IMR-90 (cell line): ENCODE measurements at regions of chr7 and their contacts with region 1.

Region 1: DNA sequence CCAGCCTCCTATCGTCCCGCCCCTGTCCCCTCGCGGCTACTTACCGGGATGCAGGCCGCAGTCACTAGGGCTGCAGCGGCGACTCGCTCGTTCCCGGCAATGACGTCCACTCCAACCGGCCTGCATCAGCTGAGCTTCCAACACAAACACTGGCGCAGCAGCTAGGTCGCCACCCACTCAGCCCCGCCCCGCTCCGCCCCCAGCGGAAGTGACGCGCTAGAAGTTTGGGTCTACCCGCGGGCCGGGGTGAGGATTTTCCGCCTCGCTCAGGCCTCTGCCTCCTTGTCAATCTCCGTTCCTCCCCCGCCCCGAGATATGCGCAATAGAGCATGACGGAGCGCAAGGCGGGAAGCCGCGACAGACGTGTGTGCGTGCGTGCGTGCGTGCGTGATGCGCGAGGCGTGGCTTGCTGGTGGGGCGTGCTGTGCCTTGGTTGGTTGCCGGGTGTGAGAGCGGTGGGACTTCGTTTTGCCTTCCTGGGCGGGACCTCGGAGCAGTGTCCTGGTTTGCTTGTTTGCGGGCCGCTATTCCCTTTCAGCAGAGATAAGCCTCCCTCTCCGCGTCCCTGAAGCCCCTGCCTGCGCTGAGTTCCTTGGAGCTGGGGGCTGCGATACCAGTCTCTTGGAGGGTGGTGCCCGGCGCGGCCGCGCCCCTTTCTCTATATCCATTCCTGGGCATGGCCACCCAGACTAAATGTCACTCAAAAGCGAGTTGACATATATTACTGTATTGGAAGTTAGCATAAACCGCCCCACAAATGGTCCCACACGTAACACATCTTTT is at the start of gene PNPLA8:
- DNase-seq: peak; percentile 99
- ATAC-seq: peak; percentile 89
- H3K4me3 ChIP-seq: peak within 1 kb of the TSS; percentile 67
- H3K27ac ChIP-seq: peak within 1 kb of the TSS; percentile 88
- H3K4me1 ChIP-seq: peaks cover 4% of the 10 kb centered on the region; the same call in 1 of the 2 replicates
- H3K27me3 ChIP-seq: no peaks in the 10 kb centered on the region
- CTCF ChIP-seq: no peak
- POLR2A ChIP-seq: peak; percentile 92
- RAD21 ChIP-seq: no peak
- total RNA-seq, gene PNPLA8: 14.5 and 23.9 TPM in 2 replicates

Region 2: DNA sequence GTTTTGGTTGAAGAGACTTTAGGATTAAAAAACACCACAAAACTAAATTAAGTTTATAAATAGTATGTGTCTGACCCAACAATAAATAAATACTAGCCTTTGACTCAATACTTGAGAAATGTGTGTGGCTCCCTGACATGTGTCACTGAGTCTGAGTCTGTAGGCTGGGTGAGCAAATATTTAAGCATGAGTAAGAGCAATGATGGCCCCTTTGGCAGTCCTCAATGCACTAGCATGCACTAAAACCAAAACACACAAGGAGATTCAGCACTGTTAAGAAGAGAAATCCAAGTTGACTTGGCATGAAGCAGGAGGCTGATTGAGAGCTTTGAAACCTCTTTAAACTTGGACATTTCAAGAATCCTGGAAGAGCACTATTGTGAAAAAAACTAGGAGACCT is 1902.3 kb before region 1 on chr7:
- CTCF ChIA-PET with region 1: no interaction called
- POLR2A ChIA-PET with region 1: no interaction called
- dilution Hi-C with region 1: no loop called
- in situ Hi-C with region 1: no loop called
- intact Hi-C with region 1: no loop called
- DNase-seq: peak; percentile 92
- ATAC-seq: peak; percentile 96
- H3K4me3 ChIP-seq: no peak overlapping the region
- H3K27ac ChIP-seq: no peak overlapping the region
- H3K4me1 ChIP-seq: peaks cover 4% of the 10 kb centered on the region
- H3K27me3 ChIP-seq: no peaks in the 10 kb centered on the region
- CTCF ChIP-seq: no peak
- POLR2A ChIP-seq: no peak
- RAD21 ChIP-seq: no peak

Region 3: DNA sequence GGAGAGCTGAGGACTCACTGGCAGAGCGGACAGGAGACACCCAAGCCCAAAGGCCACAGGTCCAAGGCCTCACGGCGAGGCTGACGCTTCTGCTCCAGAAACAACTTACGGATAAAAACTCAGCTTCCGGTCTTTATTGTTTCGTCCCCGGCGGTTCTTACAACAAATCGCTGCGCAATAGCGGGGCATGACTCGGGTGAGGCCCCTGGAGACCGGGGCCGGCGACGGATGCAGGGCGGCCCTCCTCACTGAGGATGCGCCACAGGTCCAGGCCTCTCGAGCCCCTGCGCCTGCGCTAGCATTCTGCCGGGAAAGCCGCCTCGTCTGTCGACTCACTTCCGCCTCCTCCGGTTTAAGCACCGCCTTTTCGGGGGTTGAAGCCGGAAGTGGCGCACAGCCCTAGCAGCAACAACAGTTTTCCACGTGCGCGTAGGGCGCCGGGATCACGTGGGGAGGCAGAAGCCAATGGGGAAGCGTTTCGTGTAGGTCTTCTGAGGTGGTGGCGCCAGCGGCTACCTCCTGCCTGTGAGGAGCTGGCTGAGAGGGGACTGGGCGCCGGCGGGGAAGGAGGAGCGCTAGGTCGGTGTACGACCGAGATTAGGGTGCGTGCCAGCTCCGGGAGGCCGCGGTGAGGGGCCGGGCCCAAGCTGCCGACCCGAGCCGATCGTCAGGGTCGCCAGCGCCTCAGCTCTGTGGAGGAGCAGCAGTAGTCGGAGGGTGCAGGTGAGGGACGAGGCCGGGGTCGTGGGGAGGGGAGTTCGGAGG is 43.4 kb after region 1 on chr7 and contains the starts of genes DNAJB9 and THAP5:
- CTCF ChIA-PET with region 1: no interaction called
- POLR2A ChIA-PET with region 1: no interaction called
- dilution Hi-C with region 1: no loop called
- in situ Hi-C with region 1: loop called (anchors 5 kb)
- intact Hi-C with region 1: no loop called
- DNase-seq: peak; percentile 99
- ATAC-seq: peak; percentile 95
- H3K4me3 ChIP-seq: peak within 1 kb of the TSS; percentile 79
- H3K27ac ChIP-seq: peak within 1 kb of the TSS; percentile 93
- H3K4me1 ChIP-seq: 0 out of 2 replicates have a peak, but pooled peaks cover 1% of the 10 kb centered on the region
- H3K27me3 ChIP-seq: no peaks in the 10 kb centered on the region
- CTCF ChIP-seq: no peak
- POLR2A ChIP-seq: peak; percentile 98
- RAD21 ChIP-seq: no peak
- total RNA-seq, gene DNAJB9: 31.7 and 44.6 TPM in 2 replicates
- total RNA-seq, gene THAP5: 23.7 and 32.5 TPM in 2 replicates